Dorsolateral prefrontal cortex (tissue), 120 donors: ENCODE measurements at regions of chr16 and their contacts with region 1.

Region 1: GRCh38 chr16:19265380-19265930 is 20.1 kb upstream of the CLEC19A start:
- DNase-seq: peak in 1 of 10 donors; percentile 14
- H3K4me3 ChIP-seq: no peak overlapping the region
- H3K27ac ChIP-seq: peak overlapping the region in 3 of 59 donors; percentile 12 to 55 (median 25)
- H3K27me3 ChIP-seq: no peaks in the 10 kb centered on the region
- CTCF ChIP-seq: no peak

Region 2: GRCh38 chr16:19231881-19232280 is 33.6 kb before region 1 on chr16:
- intact Hi-C with region 1: loop called in 1 of 2 experiments (anchors 2 kb)
- DNase-seq: no peak
- H3K4me3 ChIP-seq: no peak overlapping the region
- H3K27ac ChIP-seq: no peak overlapping the region
- H3K27me3 ChIP-seq: no peaks in the 10 kb centered on the region
- CTCF ChIP-seq: no peak